ENCODE measurements at regions of chr4 and their contacts with region 1.

Region 1: DNA sequence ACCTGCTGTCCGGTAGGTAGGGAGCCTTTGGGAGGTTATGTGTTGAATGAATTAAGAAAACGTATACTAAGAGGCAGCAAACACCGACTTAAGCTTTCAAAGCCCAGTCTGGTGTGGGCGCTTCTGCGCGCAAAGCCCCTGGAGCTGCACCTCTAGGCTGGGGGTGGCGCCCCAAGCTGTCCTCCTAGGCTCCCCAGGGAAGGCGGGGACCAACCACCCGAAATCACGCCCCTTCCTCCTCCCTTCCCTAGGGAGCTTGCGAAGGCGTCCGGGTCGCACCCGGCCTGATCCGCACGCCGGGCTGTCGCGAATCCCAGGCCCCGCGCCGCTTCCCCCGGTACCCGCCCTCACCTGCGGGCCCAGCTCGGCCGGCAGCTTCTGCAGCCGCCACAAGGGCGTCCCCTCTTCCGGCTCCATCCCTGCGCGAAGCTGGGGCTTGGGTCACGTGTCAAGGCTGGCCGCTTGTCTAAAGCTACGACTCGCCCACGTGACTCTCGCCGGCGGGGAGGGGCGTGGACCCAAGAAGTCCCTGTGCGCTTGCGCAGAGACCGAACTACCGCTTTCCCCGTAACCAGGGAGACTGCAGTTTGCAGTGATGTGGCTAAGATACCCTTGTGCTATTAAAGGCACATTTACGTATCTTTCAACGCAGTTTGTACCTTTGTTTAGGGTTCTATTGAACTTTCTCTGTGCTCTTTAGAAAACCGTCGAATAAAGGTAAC is at the start of gene COMMD8:
- DNase-seq: peak; percentile 97
- H3K4me3 Mint-ChIP-seq: peak within 1 kb of the TSS; percentile 84
- H3K27ac Mint-ChIP-seq: peak within 1 kb of the TSS; percentile 68
- H3K4me1 Mint-ChIP-seq: peaks cover 27% of the 10 kb centered on the region
- H3K27me3 Mint-ChIP-seq: no peaks in the 10 kb centered on the region
- total RNA-seq, gene COMMD8: 17.8 and 19.0 TPM in 2 replicates

Region 2: GRCh38 chr4:47485047-47485692 is 21.8 kb after region 1 on chr4 and contains the start of gene ATP10D:
- intact Hi-C with region 1: loop called (anchors 1 kb)
- DNase-seq: peak; percentile 66
- H3K4me3 Mint-ChIP-seq: peak within 1 kb of the TSS; percentile 90
- H3K27ac Mint-ChIP-seq: peak within 1 kb of the TSS; percentile 43
- H3K4me1 Mint-ChIP-seq: peaks cover 20% of the 10 kb centered on the region
- H3K27me3 Mint-ChIP-seq: peaks cover 9% of the 10 kb centered on the region
- total RNA-seq, gene ATP10D: 1.6 and 2.5 TPM in 2 replicates

Region 3: GRCh38 chr4:47531241-47531953 is 68.0 kb after region 1 on chr4:
- intact Hi-C with region 1: loop called (anchors 2 kb)
- DNase-seq: peak; percentile 60
- H3K4me3 Mint-ChIP-seq: no peak overlapping the region
- H3K27ac Mint-ChIP-seq: peak overlapping the region; percentile 54
- H3K4me1 Mint-ChIP-seq: peaks cover 57% of the 10 kb centered on the region
- H3K27me3 Mint-ChIP-seq: no peaks in the 10 kb centered on the region

Region 4: DNA sequence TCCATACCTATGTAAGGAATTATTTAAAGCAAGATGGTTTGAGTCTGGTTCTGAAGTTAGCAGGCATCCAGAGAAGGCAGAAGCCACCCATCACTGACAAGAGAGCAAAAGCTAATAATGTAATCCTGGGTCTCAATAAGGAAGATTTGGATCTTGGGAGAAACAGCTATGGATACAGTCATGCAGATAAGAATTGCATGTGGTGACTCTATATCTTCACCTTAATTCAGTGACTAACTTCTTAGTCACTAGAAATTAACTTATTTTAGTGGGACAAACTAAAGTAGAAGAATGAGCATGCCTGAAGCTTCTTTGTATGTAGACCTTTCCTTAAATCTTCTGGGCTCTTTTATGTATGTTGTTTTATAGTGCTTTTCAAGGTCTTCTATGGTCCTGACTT is 88.3 kb after region 1 on chr4:
- intact Hi-C with region 1: no loop called
- DNase-seq: no peak
- H3K4me3 Mint-ChIP-seq: no peak overlapping the region
- H3K27ac Mint-ChIP-seq: no peak overlapping the region
- H3K4me1 Mint-ChIP-seq: peaks cover 5% of the 10 kb centered on the region
- H3K27me3 Mint-ChIP-seq: no peaks in the 10 kb centered on the region

Region 5: DNA sequence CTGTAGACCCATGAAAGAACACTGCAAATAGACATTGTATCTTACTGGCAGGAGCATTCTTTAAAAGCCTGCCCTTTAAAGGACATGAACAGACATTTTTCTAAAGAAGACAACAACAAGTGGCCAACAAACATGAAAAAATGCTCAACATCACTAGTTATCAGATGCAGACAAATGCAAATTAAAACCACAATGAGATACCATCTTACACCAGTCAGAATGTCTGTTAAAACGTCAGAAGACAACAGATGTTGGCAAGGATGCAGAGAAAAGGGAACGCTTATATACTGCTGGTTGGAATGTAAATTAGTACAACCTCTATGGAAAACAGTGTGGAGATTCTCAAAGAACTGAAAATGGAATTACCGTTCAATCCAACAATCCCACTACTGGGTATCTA is 98.9 kb after region 1 on chr4:
- intact Hi-C with region 1: loop called (anchors 1 kb)
- DNase-seq: no peak
- H3K4me3 Mint-ChIP-seq: no peak overlapping the region
- H3K27ac Mint-ChIP-seq: no peak overlapping the region
- H3K4me1 Mint-ChIP-seq: peaks cover 20% of the 10 kb centered on the region
- H3K27me3 Mint-ChIP-seq: peaks cover 2% of the 10 kb centered on the region

Region 6: GRCh38 chr4:47914220-47914925 is 451.0 kb after region 1 on chr4 and contains the start of gene NFXL1:
- intact Hi-C with region 1: loop called (anchors 2 kb)
- DNase-seq: peak; percentile 93
- H3K4me3 Mint-ChIP-seq: peak within 1 kb of the TSS; percentile 90
- H3K27ac Mint-ChIP-seq: peak within 1 kb of the TSS; percentile 83
- H3K4me1 Mint-ChIP-seq: peaks cover 22% of the 10 kb centered on the region
- H3K27me3 Mint-ChIP-seq: no peaks in the 10 kb centered on the region
- total RNA-seq, gene NFXL1: 11.9 and 13.3 TPM in 2 replicates

Measured in activated T-helper 2 cell treated with anti-CD3 and anti-CD28 coated beads, Interferon-gamma antibody, Interleukin-2, Interleukin-4, amounts not matched to agents 10 μg/mL and 5 μg/mL and 100 μg/mL, durations not matched to agents 14 hours and 24 hours and 36 hours (primary cell).